ENCODE measurements at regions of chr14 and their contacts with region 1.

Region 1: GRCh38 chr14:60485598-60486251 is at the start of gene C14orf39:
- DNase-seq: peak; percentile 65
- ATAC-seq: peak; percentile 75
- H3K4me3 ChIP-seq: peak within 1 kb of the TSS; percentile 57
- H3K27ac ChIP-seq: no peak within 1 kb of the TSS
- H3K4me1 ChIP-seq: peaks cover 12% of the 10 kb centered on the region; the same call in 1 of the 2 replicates
- H3K27me3 ChIP-seq: peaks cover 19% of the 10 kb centered on the region; the same call in 1 of the 2 replicates
- CTCF ChIP-seq: no peak
- total RNA-seq, gene C14orf39: 0.17 and 0.47 TPM in 2 replicates

Region 2: GRCh38 chr14:60195179-60195810 is 290.4 kb before region 1 on chr14:
- CTCF ChIA-PET with region 1: no interaction called
- POLR2A ChIA-PET with region 1: no interaction called
- intact Hi-C with region 1: loop called (anchors 1 kb)
- DNase-seq: no peak
- ATAC-seq: peak; percentile 35
- H3K4me3 ChIP-seq: no peak overlapping the region
- H3K27ac ChIP-seq: no peak overlapping the region
- H3K4me1 ChIP-seq: peaks cover 26% of the 10 kb centered on the region
- H3K27me3 ChIP-seq: no peaks in the 10 kb centered on the region
- CTCF ChIP-seq: peak; percentile 49

Region 3: GRCh38 chr14:60266021-60266937 is 219.4 kb before region 1 on chr14:
- CTCF ChIA-PET with region 1: no interaction called
- POLR2A ChIA-PET with region 1: no interaction called
- intact Hi-C with region 1: loop called (anchors 2 kb)
- DNase-seq: peak; percentile 82
- ATAC-seq: peak; percentile 94
- H3K4me3 ChIP-seq: no peak overlapping the region
- H3K27ac ChIP-seq: no peak overlapping the region
- H3K4me1 ChIP-seq: peaks cover 5% of the 10 kb centered on the region; the same call in 1 of the 2 replicates
- H3K27me3 ChIP-seq: no peaks in the 10 kb centered on the region
- CTCF ChIP-seq: peak; percentile 100

Region 4: GRCh38 chr14:60331201-60332045 is 154.3 kb before region 1 on chr14:
- CTCF ChIA-PET with region 1: no interaction called
- POLR2A ChIA-PET with region 1: no interaction called
- intact Hi-C with region 1: loop called (anchors 1 kb)
- DNase-seq: peak; percentile 96
- ATAC-seq: peak; percentile 54
- H3K4me3 ChIP-seq: peak overlapping the region; percentile 48
- H3K27ac ChIP-seq: no peak overlapping the region
- H3K4me1 ChIP-seq: no peaks in the 10 kb centered on the region
- H3K27me3 ChIP-seq: peaks cover 14% of the 10 kb centered on the region; the same call in 1 of the 2 replicates
- CTCF ChIP-seq: peak; percentile 100

Region 5: GRCh38 chr14:60420050-60420449 is 65.7 kb before region 1 on chr14:
- CTCF ChIA-PET with region 1: no interaction called
- POLR2A ChIA-PET with region 1: no interaction called
- intact Hi-C with region 1: loop called (anchors 2 kb)
- DNase-seq: no peak
- ATAC-seq: no peak
- H3K4me3 ChIP-seq: no peak overlapping the region
- H3K27ac ChIP-seq: no peak overlapping the region
- H3K4me1 ChIP-seq: peaks cover 4% of the 10 kb centered on the region
- H3K27me3 ChIP-seq: no peaks in the 10 kb centered on the region
- CTCF ChIP-seq: no peak

Region 6: DNA sequence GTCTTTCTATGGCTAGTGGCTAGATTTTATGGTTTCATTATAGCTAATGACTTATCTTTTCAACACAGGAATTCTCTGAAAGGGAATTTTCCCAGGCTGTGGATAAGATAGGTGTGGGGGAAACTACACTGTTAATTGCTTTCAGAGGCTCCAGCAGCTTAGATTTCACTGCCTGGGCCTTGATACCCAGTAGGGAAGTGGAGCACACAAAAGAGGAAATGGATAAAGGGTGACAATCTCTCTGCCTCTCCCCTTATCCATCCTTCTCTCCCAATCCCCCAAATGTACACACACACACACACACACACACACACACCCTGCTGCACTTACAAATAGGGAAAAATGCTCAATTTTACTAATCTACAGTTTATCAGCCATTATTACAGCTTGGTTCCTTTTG is 219.4 kb after region 1 on chr14:
- CTCF ChIA-PET with region 1: no interaction called
- POLR2A ChIA-PET with region 1: no interaction called
- intact Hi-C with region 1: no loop called
- DNase-seq: no peak
- ATAC-seq: no peak
- H3K4me3 ChIP-seq: no peak overlapping the region
- H3K27ac ChIP-seq: no peak overlapping the region
- H3K4me1 ChIP-seq: no peaks in the 10 kb centered on the region
- H3K27me3 ChIP-seq: no peaks in the 10 kb centered on the region
- CTCF ChIP-seq: no peak

Measured in PC-3 (cell line).